ENCODE measurements at regions of chr10 and their contacts with region 1.

Region 1: DNA sequence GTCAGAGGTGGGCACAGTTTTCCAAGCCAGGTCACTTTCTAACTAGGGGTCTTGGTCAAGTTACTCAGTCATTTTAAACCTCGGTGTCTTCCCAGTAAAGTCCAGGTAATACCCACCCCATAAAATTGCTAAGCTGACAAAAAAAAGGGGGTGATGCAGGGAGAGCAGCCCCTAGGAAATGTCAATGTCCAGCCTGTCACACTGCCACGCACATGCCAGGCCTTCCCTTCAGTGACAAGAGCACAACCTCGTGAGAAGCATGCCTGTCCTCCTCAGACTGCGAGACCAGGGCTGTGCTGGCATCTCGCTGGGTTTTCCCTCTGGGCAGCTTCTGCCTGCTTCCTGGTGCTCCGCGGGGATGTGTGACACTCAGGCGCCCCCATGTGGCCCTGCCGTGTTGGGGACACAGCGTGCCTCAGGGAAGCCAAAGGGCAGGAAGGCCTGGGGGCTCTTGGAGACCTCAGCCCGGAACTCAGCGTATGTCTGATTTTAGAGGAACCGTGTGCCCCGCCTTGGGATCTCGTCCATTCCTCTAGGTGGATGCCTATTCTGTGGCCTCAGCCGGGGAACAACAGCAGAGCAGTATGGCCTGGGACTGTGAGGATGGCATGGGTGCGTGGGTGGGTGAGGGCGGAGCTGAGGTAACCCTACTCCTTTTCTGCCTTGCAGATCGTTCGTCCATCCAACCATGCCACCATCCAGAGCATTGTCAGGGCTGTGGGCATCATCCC is 10.2 kb upstream of the GDF2 start:
- DNase-seq: peak; percentile 67 to 84 (median 76)
- H3K4me3 ChIP-seq: no peak overlapping the region
- H3K4me3 Mint-ChIP-seq: no peak overlapping the region
- H3K27ac ChIP-seq: no peak overlapping the region
- H3K27ac Mint-ChIP-seq: no peak overlapping the region
- H3K4me1 ChIP-seq: no peaks in the 10 kb centered on the region
- H3K4me1 Mint-ChIP-seq: peaks cover 6% of the 10 kb centered on the region
- H3K27me3 ChIP-seq: no peaks in the 10 kb centered on the region
- H3K27me3 Mint-ChIP-seq: peaks cover 5 to 15% (median 10%) of the 10 kb centered on the region in 3 donors
- CTCF ChIP-seq: peak; percentile 93

Region 2: DNA sequence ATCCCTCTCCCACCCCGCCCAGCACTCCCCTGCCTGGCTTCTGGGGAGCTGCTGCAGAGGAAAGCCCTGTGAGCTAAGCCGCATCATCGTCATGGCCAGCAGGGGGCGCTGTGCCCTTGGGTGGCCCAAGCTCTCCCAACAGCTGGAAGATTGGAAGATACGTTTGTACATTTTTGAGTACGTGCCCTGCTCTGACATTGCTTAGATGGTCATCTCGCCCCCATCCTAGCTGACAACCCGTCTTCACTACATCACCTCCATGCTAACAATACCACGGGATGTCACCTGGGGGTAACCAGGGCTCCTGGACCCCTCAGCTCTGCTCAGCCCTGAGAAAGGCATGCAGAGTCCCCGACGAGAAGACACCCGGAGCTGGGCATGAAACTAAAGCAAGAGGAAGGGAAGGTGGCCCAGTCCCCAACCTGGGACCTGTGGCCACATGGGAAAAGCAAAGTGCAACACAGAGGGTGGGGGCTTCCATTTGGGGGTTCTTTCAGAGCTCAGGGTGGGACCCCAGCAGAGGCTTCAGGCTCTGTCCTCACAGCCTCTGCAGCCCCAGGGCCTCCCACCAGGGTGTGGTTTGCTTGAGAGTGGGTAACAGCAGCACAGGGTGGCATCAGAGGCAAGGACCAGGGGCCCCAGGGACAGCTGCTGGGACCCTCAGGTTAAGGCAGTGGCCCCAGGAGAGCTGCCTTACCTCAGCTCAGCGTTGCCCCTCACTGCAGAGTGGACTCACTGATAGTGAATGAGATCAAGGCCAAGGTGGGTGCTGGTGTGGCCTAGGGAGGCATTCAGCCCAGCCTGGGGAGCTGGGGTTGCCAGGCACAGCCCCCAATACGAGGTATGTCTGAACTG is 264.2 kb before region 1 on chr10:
- intact Hi-C with region 1: loop called (anchors 1 to 2 kb)
- DNase-seq: peak; percentile 61 to 68 (median 63)
- H3K4me3 ChIP-seq: no peak overlapping the region
- H3K4me3 Mint-ChIP-seq: no peak overlapping the region
- H3K27ac ChIP-seq: no peak overlapping the region
- H3K27ac Mint-ChIP-seq: peak overlapping the region in 2 of 7 donors; percentile 10 to 68
- H3K4me1 ChIP-seq: peaks cover 0 to 2% of the 10 kb centered on the region in 2 donors
- H3K4me1 Mint-ChIP-seq: peaks cover 8% of the 10 kb centered on the region
- H3K27me3 ChIP-seq: no peaks in the 10 kb centered on the region
- H3K27me3 Mint-ChIP-seq: peaks cover 0 to 5% (median 4%) of the 10 kb centered on the region in 3 donors
- CTCF ChIP-seq: peak; percentile 87

Measured in CD14-positive monocyte (primary cell).